ENCODE measurements at regions of chr12 and their contacts with region 1.

Region 1: GRCh38 chr12:114697741-114698565 is 14.0 kb upstream of the TBX3 start:
- DNase-seq: no peak
- H3K4me3 Mint-ChIP-seq: no peak overlapping the region
- H3K27ac Mint-ChIP-seq: no peak overlapping the region
- H3K4me1 Mint-ChIP-seq: no peaks in the 10 kb centered on the region
- H3K27me3 Mint-ChIP-seq: peaks cover 88% of the 10 kb centered on the region

Region 2: GRCh38 chr12:113473942-113474341 is 1224.0 kb before region 1 on chr12:
- intact Hi-C with region 1: loop called (anchors 2 kb)
- DNase-seq: no peak
- H3K4me3 Mint-ChIP-seq: no peak overlapping the region
- H3K27ac Mint-ChIP-seq: no peak overlapping the region
- H3K4me1 Mint-ChIP-seq: peaks cover 3% of the 10 kb centered on the region
- H3K27me3 Mint-ChIP-seq: peaks cover 85% of the 10 kb centered on the region

Region 3: GRCh38 chr12:114368685-114369452 is 329.1 kb before region 1 on chr12:
- intact Hi-C with region 1: no loop called
- DNase-seq: no peak
- H3K4me3 Mint-ChIP-seq: no peak overlapping the region
- H3K27ac Mint-ChIP-seq: no peak overlapping the region
- H3K4me1 Mint-ChIP-seq: no peaks in the 10 kb centered on the region
- H3K27me3 Mint-ChIP-seq: no peaks in the 10 kb centered on the region

Region 4: DNA sequence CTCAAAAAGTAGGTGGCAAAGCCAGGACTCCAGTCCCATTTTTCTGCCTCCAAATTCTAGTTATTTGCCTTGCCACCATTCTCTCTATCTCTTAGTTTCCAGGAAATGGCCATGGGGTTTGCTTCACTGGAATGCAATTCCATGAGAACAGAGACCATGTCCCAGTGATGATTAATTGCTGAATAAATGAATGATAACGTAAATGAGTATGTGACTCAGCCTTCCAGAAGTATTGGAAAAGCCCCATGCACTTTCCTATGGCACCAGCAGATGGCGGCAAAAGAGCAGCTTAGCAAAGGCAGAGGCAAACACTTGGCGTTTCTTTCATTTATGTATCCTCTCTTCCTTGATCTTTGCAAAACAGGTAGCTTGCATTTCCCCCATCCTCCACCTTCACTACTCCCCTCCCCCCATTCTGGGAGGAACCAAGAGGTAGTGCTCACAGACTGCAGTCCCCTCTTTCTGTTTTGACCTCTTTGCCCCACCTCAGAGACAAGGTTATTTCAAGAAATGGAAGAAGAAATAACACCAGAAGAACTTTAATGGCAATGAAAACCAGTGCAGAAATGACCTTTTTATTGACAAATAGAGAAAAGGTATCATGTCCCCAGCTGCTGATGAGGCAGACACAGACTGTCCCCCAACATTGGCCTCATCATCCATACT is 35.3 kb before region 1 on chr12:
- intact Hi-C with region 1: loop called (anchors 5 kb)
- DNase-seq: peak; percentile 24
- H3K4me3 Mint-ChIP-seq: no peak overlapping the region
- H3K27ac Mint-ChIP-seq: no peak overlapping the region
- H3K4me1 Mint-ChIP-seq: no peaks in the 10 kb centered on the region
- H3K27me3 Mint-ChIP-seq: peaks cover 43% of the 10 kb centered on the region